Dendritic cell treated with granulocyte-macrophage colony-stimulating factor and Interleukin-4, amounts not matched to agents 40 ng/mL and 50 ng/mL, for 4 days (primary cell): ENCODE measurements at regions of chr11 and their contacts with region 1.

Region 1: GRCh38 chr11:131867457-131868257 is 497.2 kb downstream of the NTM start:
- H3K4me3 Mint-ChIP-seq: no peak overlapping the region
- H3K27ac Mint-ChIP-seq: no peak overlapping the region
- H3K4me1 Mint-ChIP-seq: peaks cover 7% of the 10 kb centered on the region
- H3K27me3 Mint-ChIP-seq: peaks cover 6% of the 10 kb centered on the region

Region 2: DNA sequence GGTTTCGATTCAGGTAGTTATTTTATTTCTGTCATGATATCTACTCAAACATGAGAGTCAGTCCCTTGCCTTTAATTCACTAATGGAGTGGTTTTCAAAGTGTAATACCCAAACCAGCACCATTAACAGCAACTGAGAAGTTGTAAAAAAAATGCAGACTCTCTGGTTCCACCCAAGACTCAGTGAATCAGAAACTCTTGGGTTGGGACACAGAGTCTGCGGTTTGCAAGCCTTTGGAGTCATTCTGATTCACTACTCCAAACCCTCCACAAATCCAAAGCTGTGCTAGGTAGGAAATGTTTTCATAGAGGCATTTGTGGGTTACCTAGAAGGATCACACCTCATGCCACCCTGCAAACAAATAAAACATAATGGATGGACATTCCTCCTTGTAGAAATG is 157.1 kb before region 1 on chr11:
- intact Hi-C with region 1: no loop called
- H3K4me3 Mint-ChIP-seq: no peak overlapping the region
- H3K27ac Mint-ChIP-seq: no peak overlapping the region
- H3K4me1 Mint-ChIP-seq: peaks cover 14% of the 10 kb centered on the region
- H3K27me3 Mint-ChIP-seq: peaks cover 1% of the 10 kb centered on the region

Region 3: DNA sequence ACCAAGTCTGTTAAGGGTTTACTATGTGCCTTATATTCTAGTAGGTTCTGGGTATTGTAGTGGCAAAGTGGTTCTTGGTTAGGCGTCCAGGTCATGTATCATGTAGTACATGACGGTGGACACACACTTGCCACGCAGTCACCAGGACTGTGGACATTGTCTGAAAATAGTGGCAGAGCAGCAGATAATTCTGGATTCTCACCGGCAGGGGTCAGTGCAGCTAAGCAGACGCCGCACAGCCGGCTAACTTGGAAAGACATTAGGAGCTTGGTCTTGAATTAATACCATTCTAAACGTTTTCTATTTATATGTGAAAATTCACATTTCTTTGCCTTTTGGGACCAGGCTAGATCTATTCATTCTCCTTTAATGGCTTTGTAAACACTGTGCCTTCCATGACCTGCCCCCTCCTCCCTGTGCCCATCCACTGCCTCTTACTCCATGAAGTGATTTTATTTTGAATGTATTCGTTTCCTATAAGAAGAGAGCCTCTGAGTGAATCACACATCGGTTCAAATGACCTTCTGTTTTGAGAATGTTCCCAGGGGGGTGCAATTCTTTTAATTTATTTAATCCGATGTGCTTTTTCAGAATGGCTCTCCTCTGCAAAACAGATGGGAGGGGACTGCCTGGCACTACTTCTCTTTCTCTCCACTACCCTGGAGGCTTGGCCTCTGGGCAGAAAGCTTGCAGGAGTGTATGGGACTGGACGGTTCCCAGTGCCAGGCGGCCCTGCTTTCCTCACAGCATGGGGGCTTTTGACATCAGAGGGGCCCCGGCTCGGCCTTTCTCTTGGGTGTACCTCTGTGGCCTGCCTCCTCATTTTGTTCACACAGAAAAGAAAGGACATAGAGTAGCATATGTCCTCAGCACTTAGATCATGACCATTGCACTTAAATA is 119.3 kb before region 1 on chr11:
- intact Hi-C with region 1: loop called (anchors 10 kb)
- H3K4me3 Mint-ChIP-seq: no peak overlapping the region
- H3K27ac Mint-ChIP-seq: no peak overlapping the region
- H3K4me1 Mint-ChIP-seq: no peaks in the 10 kb centered on the region
- H3K27me3 Mint-ChIP-seq: peaks cover 8% of the 10 kb centered on the region

Region 4: DNA sequence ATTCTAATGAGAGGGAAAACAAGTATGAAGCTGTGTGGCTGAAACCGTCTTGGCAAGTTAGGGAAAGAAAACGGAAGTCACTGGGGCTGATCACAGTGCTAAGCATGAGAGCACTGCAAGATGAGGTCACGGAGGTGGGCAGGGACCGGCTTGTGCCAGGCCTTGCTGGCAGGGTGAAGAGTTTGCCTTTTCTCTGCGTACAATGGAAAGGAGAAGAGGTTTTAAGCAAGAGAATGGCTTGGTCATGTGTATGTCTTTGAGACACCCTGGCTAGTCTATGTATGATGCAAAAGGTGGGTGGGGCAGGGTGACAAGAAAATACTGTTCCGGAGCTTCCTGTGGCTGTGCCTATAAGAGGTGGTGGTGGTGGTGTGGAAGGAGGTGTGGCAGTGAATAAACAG is 70.7 kb after region 1 on chr11:
- intact Hi-C with region 1: no loop called
- H3K4me3 Mint-ChIP-seq: no peak overlapping the region
- H3K27ac Mint-ChIP-seq: no peak overlapping the region
- H3K4me1 Mint-ChIP-seq: peaks cover 6% of the 10 kb centered on the region
- H3K27me3 Mint-ChIP-seq: peaks cover 28% of the 10 kb centered on the region

Region 5: GRCh38 chr11:132028380-132029240 is 161.0 kb after region 1 on chr11:
- intact Hi-C with region 1: loop called (anchors 5 kb)
- H3K4me3 Mint-ChIP-seq: no peak overlapping the region
- H3K27ac Mint-ChIP-seq: no peak overlapping the region
- H3K4me1 Mint-ChIP-seq: peaks cover 19% of the 10 kb centered on the region
- H3K27me3 Mint-ChIP-seq: peaks cover 8% of the 10 kb centered on the region

Region 6: DNA sequence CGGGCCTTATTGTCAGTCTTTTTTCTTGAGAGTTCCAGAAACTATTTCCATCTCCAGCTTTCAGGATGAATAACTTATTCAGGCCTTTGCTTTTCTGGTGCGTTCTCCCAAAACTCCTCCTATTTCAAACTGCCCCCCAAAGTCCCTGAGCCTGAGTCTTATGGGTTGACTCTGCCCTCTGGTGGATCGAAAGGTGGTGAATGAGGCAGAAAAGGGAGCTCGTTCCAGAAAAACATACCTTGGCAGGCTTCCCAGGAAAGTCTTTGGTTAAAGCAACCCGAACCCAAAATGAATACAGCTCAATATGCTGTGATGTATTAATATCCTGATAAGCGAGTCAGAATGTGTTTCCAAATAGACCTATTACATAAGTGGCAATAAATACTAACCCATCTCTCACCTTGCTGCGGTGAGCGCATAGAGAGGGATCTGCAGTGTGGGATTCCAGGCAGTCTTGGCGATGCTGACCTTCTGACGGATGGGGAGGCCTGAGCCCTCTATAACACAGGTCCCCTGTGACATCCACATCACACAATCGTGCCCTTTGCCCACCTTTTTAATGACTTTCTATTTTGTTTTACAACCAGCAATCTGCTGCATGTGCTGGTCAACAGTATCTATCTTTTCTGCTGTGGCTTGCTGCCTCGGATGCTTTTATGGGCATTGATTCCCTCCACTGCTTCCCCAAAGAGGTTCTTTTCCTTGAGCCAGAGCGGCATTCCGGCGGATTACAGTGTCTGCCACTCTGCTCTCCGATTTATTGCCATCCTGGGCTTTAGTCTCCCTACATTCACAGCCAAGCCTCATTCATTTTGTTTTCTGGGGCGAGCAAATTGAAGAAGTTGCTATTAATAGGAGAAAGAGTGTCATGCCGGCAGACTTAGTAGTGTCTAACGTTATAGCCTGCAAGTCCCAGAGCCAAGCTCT is 259.6 kb after region 1 on chr11:
- intact Hi-C with region 1: loop called (anchors 1 kb)
- H3K4me3 Mint-ChIP-seq: no peak overlapping the region
- H3K27ac Mint-ChIP-seq: no peak overlapping the region
- H3K4me1 Mint-ChIP-seq: peaks cover 7% of the 10 kb centered on the region
- H3K27me3 Mint-ChIP-seq: peaks cover 36% of the 10 kb centered on the region

Region 7: DNA sequence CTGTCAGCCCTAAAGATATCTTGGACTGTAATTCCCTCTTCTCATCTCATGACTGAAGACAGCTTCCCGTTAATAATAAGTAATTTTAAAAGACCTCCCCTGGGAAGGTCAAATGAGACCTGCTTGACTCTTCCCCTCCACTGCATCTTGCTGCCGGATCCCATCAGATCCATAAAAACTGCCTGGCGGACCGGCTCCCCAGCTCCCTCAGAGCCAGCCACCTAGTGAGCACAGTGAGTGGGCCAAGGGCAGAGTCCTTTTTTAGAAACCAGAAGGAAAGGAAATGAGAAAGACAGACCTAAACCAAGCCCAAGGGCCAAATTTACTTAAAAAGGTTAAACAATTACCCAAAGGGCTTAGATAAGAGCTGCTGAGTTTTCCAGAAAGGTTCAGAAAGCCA is 1069.4 kb after region 1 on chr11:
- intact Hi-C with region 1: loop called (anchors 5 kb)
- H3K4me3 Mint-ChIP-seq: no peak overlapping the region
- H3K27ac Mint-ChIP-seq: no peak overlapping the region
- H3K4me1 Mint-ChIP-seq: no peaks in the 10 kb centered on the region
- H3K27me3 Mint-ChIP-seq: peaks cover 4% of the 10 kb centered on the region